ENCODE measurements at regions of chr14 and their contacts with region 1.

Region 1: GRCh38 chr14:71117839-71118743 is 210.8 kb downstream of the PCNX1 start:
- DNase-seq: peak; percentile 78
- ATAC-seq: peak; percentile 44
- H3K4me3 ChIP-seq: no peak overlapping the region
- H3K27ac ChIP-seq: peak overlapping the region; percentile 46; the same call in 1 of the 2 replicates
- H3K4me1 ChIP-seq: peaks cover 10% of the 10 kb centered on the region
- H3K27me3 ChIP-seq: no peaks in the 10 kb centered on the region
- CTCF ChIP-seq: no peak
- POLR2A ChIP-seq: no peak
- RAD21 ChIP-seq: no peak

Region 2: GRCh38 chr14:70919774-70920173 is 198.3 kb before region 1 on chr14:
- CTCF ChIA-PET with region 1: no interaction called
- POLR2A ChIA-PET with region 1: no interaction called
- dilution Hi-C with region 1: no loop called
- in situ Hi-C with region 1: no loop called
- intact Hi-C with region 1: loop called (anchors 10 kb)
- DNase-seq: peak; percentile 37
- ATAC-seq: no peak
- H3K4me3 ChIP-seq: no peak overlapping the region
- H3K27ac ChIP-seq: no peak overlapping the region
- H3K4me1 ChIP-seq: peaks cover 11% of the 10 kb centered on the region
- H3K27me3 ChIP-seq: no peaks in the 10 kb centered on the region
- CTCF ChIP-seq: no peak
- POLR2A ChIP-seq: no peak
- RAD21 ChIP-seq: no peak

Measured in IMR-90 (cell line).